GM23248 (cell line): ENCODE measurements at regions of chr15 and their contacts with region 1.

Region 1: DNA sequence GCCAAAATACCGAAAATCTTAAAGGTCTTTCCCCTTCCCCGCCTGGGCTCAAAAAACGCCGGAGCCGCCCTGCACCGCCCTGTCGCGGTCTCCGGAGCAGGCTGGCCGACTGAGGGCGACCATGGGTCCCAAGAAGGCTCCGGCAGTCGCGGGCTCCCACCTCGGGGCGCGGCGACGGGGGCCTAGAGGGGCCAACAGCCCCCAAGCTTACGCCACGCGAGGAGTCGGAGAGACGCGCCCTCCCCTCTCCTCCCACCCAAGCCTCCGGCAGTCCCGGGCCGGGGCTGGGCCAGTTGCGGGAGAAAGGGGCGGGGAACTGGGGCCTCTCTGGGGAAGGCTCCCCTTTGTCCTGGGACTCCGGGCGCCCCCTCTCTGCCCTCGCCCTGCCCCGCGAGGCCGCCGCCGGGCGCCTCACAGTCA is 69.2 kb downstream of the GOLGA8B start:
- DNase-seq: peak; percentile 58
- H3K4me3 ChIP-seq: peak overlapping the region; percentile 79
- H3K27ac ChIP-seq: no peak overlapping the region
- H3K4me1 ChIP-seq: no peaks in the 10 kb centered on the region
- H3K27me3 ChIP-seq: 0 out of 2 replicates have a peak, but pooled peaks cover 9% of the 10 kb centered on the region

Region 2: GRCh38 chr15:33735637-33736247 is 778.5 kb before region 1 on chr15:
- in situ Hi-C with region 1: no loop called
- DNase-seq: peak; percentile 26
- H3K4me3 ChIP-seq: no peak overlapping the region
- H3K27ac ChIP-seq: no peak overlapping the region
- H3K4me1 ChIP-seq: no peaks in the 10 kb centered on the region
- H3K27me3 ChIP-seq: peaks cover 11% of the 10 kb centered on the region; the same call in 1 of the 2 replicates

Region 3: GRCh38 chr15:34367101-34368081 is 146.9 kb before region 1 on chr15 and contains the start of gene LPCAT4:
- in situ Hi-C with region 1: loop called (anchors 25 kb)
- DNase-seq: peak; percentile 96
- H3K4me3 ChIP-seq: peak within 1 kb of the TSS; percentile 92
- H3K27ac ChIP-seq: peak within 1 kb of the TSS; percentile 77
- H3K4me1 ChIP-seq: no peaks in the 10 kb centered on the region; the same call in 1 of the 2 replicates
- H3K27me3 ChIP-seq: no peaks in the 10 kb centered on the region
- total RNA-seq, gene LPCAT4: 17.5 and 34.1 TPM in 2 replicates

Region 4: DNA sequence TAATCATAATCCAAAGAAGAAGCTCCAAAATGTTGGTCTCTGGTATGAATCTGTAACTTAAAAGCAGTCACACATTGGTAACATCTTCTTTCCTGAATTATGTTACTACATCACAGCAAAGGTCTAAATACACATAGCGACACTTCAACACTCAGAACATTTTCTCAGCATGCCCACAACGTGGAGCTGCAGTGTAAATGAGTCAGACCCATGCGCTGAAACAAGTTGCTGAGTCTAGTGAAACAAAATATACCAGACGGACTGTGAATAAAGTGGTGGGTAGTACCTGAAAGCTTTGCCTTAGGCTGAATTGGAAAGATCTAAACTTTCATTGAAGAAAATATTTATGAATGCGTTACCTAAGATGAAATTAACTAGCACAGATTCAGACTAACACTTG is 102.4 kb after region 1 on chr15:
- in situ Hi-C with region 1: no loop called
- DNase-seq: peak; percentile 67
- H3K4me3 ChIP-seq: no peak overlapping the region
- H3K27ac ChIP-seq: no peak overlapping the region
- H3K4me1 ChIP-seq: no peaks in the 10 kb centered on the region
- H3K27me3 ChIP-seq: peaks cover 13% of the 10 kb centered on the region; the same call in 1 of the 2 replicates